ENCODE measurements at regions of chr11 and their contacts with region 1.

Region 1: GRCh38 chr11:46489661-46490560 is 98.3 kb upstream of the CHRM4 start:
- DNase-seq: peak; percentile 56 to 63
- H3K4me3 ChIP-seq: no peak overlapping the region
- H3K4me3 Mint-ChIP-seq: no peak overlapping the region
- H3K27ac Mint-ChIP-seq: no peak overlapping the region
- H3K4me1 ChIP-seq: peaks cover 1% of the 10 kb centered on the region
- H3K4me1 Mint-ChIP-seq: peaks cover 3% of the 10 kb centered on the region
- H3K27me3 ChIP-seq: no peaks in the 10 kb centered on the region
- H3K27me3 Mint-ChIP-seq: no peaks in the 10 kb centered on the region
- CTCF ChIP-seq: peak; percentile 57 to 86

Region 2: GRCh38 chr11:46242916-46243795 is 246.8 kb before region 1 on chr11:
- CTCF ChIA-PET with region 1: no interaction called
- POLR2A ChIA-PET with region 1: no interaction called
- intact Hi-C with region 1: no loop called
- DNase-seq: peak; percentile 95 to 98
- H3K4me3 ChIP-seq: peak overlapping the region; percentile 56
- H3K4me3 Mint-ChIP-seq: peak overlapping the region; percentile 92
- H3K27ac Mint-ChIP-seq: peak overlapping the region; percentile 99
- H3K4me1 ChIP-seq: peaks cover 14% of the 10 kb centered on the region
- H3K4me1 Mint-ChIP-seq: peaks cover 42% of the 10 kb centered on the region
- H3K27me3 ChIP-seq: no peaks in the 10 kb centered on the region; the same call in 1 of the 2 replicates
- H3K27me3 Mint-ChIP-seq: no peaks in the 10 kb centered on the region
- CTCF ChIP-seq: no peak

Region 3: DNA sequence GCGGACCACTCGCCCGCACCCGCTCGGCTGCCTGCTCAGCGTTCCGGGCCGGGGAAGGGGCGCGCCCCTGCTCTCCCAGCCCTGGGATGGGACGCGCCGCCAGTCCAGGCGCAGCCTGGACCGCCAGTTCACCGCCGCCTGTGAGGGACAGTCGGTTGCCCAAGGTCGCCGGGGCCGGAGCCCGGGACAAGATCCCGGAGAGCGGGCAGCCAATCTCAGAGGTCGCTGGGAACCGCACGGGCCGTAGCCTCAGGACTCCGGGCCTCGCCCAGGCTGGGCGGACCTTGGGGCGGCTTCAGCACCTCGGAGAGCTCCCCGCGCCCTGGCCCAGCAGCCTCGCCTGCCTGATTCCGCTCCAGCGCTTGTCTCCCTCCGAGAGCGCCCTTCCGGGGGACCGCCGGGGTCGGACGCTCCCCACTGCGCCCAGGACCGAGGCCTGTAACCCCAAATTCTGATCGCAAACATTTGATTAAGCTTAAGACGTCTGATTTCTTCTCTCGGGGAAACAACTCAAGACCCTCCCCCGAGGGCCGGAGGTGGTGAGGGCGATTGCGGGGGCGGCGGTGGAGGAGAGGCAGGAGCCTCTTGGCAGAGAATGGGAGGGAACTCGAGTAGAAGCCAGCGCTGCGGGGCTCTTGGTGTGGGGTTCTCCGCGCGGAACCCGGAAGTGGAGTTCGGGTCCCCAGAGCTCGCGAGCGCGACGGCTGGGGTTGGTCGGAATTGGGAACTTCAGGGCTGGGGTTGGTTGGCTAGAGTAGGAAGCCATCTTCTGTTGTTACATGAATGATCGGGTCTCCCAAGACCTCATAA is 97.3 kb before region 1 on chr11:
- CTCF ChIA-PET with region 1: interaction called, 10 read pairs
- POLR2A ChIA-PET with region 1: no interaction called
- intact Hi-C with region 1: no loop called
- DNase-seq: peak; percentile 89 to 95
- H3K4me3 ChIP-seq: peak overlapping the region; percentile 55
- H3K4me3 Mint-ChIP-seq: peak overlapping the region; percentile 75
- H3K27ac Mint-ChIP-seq: peak overlapping the region; percentile 50
- H3K4me1 ChIP-seq: peaks cover 11% of the 10 kb centered on the region
- H3K4me1 Mint-ChIP-seq: peaks cover 19% of the 10 kb centered on the region
- H3K27me3 ChIP-seq: peaks cover 6% of the 10 kb centered on the region
- H3K27me3 Mint-ChIP-seq: peaks cover 8% of the 10 kb centered on the region
- CTCF ChIP-seq: no peak

Region 4: DNA sequence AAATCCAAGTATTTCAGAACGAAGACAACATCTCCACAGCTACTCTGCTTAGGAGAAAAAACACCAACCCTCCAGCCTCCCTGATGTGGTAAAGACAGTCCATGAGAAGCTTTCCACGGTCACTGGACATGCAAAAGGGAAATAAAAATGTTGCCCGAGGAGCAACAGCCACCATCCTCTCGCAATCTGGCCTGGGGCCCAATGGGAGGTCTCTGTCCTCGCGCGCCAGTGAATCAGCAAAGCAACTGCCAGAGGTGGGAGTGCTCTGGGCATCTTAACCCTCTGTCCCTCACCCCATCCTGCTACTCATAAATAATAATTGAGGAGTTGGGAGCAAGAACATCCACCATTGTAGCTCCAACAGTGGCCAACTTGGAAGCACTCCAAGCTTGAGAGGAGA is 17.9 kb after region 1 on chr11:
- CTCF ChIA-PET with region 1: interaction called, 13 read pairs
- POLR2A ChIA-PET with region 1: no interaction called
- intact Hi-C with region 1: no loop called
- DNase-seq: no peak
- H3K4me3 ChIP-seq: no peak overlapping the region
- H3K4me3 Mint-ChIP-seq: no peak overlapping the region
- H3K27ac Mint-ChIP-seq: no peak overlapping the region
- H3K4me1 ChIP-seq: peaks cover 3% of the 10 kb centered on the region; the same call in 1 of the 2 replicates
- H3K4me1 Mint-ChIP-seq: no peaks in the 10 kb centered on the region
- H3K27me3 ChIP-seq: no peaks in the 10 kb centered on the region
- H3K27me3 Mint-ChIP-seq: no peaks in the 10 kb centered on the region
- CTCF ChIP-seq: no peak

Region 5: GRCh38 chr11:46529095-46529905 is 39.4 kb after region 1 on chr11:
- CTCF ChIA-PET with region 1: interaction called, 24 read pairs
- POLR2A ChIA-PET with region 1: no interaction called
- intact Hi-C with region 1: loop called (anchors 2 kb)
- DNase-seq: peak; percentile 71 to 81
- H3K4me3 ChIP-seq: no peak overlapping the region
- H3K4me3 Mint-ChIP-seq: no peak overlapping the region
- H3K27ac Mint-ChIP-seq: no peak overlapping the region
- H3K4me1 ChIP-seq: no peaks in the 10 kb centered on the region
- H3K4me1 Mint-ChIP-seq: peaks cover 8% of the 10 kb centered on the region
- H3K27me3 ChIP-seq: no peaks in the 10 kb centered on the region
- H3K27me3 Mint-ChIP-seq: no peaks in the 10 kb centered on the region
- CTCF ChIP-seq: peak; percentile 91 to 94

Region 6: GRCh38 chr11:46616998-46617675 is 127.2 kb after region 1 on chr11 and contains the starts of genes ATG13 and HARBI1:
- CTCF ChIA-PET with region 1: interaction called, 9 read pairs
- POLR2A ChIA-PET with region 1: no interaction called
- intact Hi-C with region 1: loop called (anchors 1 kb)
- DNase-seq: peak; percentile 92 to 96
- H3K4me3 ChIP-seq: peak within 1 kb of the TSS; percentile 96
- H3K4me3 Mint-ChIP-seq: peak within 1 kb of the TSS; percentile 90
- H3K27ac Mint-ChIP-seq: peak within 1 kb of the TSS; percentile 97
- H3K4me1 ChIP-seq: peaks cover 11% of the 10 kb centered on the region
- H3K4me1 Mint-ChIP-seq: peaks cover 18% of the 10 kb centered on the region
- H3K27me3 ChIP-seq: no peaks in the 10 kb centered on the region
- H3K27me3 Mint-ChIP-seq: no peaks in the 10 kb centered on the region
- CTCF ChIP-seq: no peak
- total RNA-seq, gene ATG13: 75.9 and 101 TPM in 2 replicates
- total RNA-seq, gene HARBI1: 7.6 and 9.1 TPM in 2 replicates